ENCODE measurements at regions of chr3 and their contacts with region 1.

Region 1: DNA sequence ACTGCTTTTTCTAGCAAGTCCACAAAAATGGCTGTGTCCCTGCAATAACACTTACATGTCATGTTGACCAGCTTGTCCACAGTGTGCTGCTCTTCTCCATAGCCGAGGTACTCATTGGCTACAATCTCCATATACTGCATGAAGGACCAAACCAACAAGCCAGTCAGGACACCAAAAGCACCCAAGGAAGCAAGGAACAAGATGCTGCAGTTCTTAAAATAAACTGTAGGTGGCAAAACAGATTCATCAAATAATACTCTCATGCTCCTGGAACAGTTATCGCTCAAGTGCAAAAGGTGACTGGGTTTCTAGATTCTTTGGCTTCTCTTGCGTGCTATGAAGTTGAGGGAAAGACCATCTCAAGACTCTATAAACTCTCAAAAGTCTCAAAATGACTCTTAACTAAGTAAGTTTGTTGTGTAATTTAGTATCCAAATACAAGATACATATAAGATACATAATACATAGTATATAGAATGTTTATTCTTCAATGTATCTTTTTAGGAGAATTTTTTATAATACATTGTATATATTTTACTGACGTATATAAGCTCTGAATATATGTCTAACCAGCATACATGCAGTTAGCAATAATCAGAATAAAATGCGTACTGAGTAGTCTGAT is 57.0 kb downstream of the NEK10 start:
- DNase-seq: no peak
- H3K4me3 ChIP-seq: no peak overlapping the region
- H3K27ac ChIP-seq: no peak overlapping the region
- H3K27me3 ChIP-seq: no peaks in the 10 kb centered on the region
- CTCF ChIP-seq: peak; percentile 51 to 90 (median 82)

Region 2: DNA sequence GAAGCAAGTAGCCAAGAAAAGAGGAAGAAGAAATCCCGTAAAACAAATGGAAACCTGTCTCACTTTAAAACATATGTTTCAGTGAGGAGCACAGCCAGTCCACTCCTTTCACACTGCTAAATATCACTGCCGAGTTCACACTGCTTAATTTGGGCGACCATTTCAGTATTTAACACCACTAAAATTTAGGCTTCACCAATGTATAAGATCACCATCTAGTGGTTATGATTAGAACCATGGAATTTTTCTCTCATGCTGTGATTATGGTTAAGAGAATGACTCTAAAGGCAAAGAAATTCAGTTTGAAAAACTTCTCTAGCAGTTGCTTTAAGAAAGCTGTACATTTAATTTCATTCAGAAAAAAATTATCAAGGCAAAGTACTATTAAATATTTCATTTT is 155.4 kb after region 1 on chr3:
- intact Hi-C with region 1: loop called in 1 of 2 experiments (anchors 10 kb)
- DNase-seq: no peak
- H3K4me3 ChIP-seq: peak overlapping the region in 2 of 59 donors; percentile 3 to 9
- H3K27ac ChIP-seq: no peak overlapping the region
- H3K27me3 ChIP-seq: no peaks in the 10 kb centered on the region
- CTCF ChIP-seq: peak; percentile 21 to 78 (median 64)

Region 3: DNA sequence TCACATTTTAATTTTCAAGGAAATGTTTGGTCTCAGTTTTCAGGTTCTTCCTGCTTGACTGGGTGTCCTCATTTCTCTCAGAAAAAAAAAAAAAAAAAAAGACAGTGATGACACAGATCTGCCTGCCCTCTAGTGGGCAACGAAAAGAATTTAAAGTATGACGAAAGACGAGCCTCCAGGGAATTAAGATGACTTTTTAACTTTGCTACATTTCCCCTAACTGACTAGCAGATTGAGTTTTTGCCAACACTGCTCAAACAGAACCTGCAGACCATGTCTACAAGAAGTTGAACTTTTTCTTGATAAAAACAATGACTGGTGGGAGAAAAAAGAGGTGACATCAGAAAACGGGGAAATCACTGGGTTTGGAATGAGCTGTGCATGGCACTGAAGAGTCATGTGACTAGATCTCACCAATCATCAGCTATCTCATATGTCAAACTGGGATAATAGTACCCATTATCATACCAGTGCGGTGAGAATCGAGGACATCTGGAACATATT is 369.1 kb after region 1 on chr3:
- intact Hi-C with region 1: loop called (anchors 5 kb)
- DNase-seq: no peak
- H3K4me3 ChIP-seq: peak overlapping the region in 48 of 59 donors; percentile 5 to 53 (median 31)
- H3K27ac ChIP-seq: peak overlapping the region in 1 of 59 donors; percentile 51
- H3K27me3 ChIP-seq: no peaks in the 10 kb centered on the region
- CTCF ChIP-seq: peak; percentile 51 to 91 (median 77)